Naive thymus-derived CD4-positive, alpha-beta T cell (primary cell): ENCODE measurements at regions of chr6 and their contacts with region 1.

Region 1: GRCh38 chr6:90285611-90286381 is 10.8 kb downstream of the BACH2 start:
- DNase-seq: peak in 8 of 9 donors; percentile 53 to 87 (median 74)
- ATAC-seq: peak; percentile 68
- H3K4me3 ChIP-seq: peak overlapping the region; percentile 51
- H3K4me3 Mint-ChIP-seq: peak overlapping the region; percentile 83 to 94 (median 88)
- H3K27ac ChIP-seq: peak overlapping the region; percentile 81
- H3K27ac Mint-ChIP-seq: peak overlapping the region; percentile 89 to 100 (median 96)
- H3K4me1 ChIP-seq: peaks cover 21 to 72% of the 10 kb centered on the region in 2 donors
- H3K4me1 Mint-ChIP-seq: peaks cover 54 to 96% (median 92%) of the 10 kb centered on the region in 7 donors
- H3K27me3 ChIP-seq: no peaks in the 10 kb centered on the region
- H3K27me3 Mint-ChIP-seq: peaks cover 0 to 2% (median 0%) of the 10 kb centered on the region in 5 donors

Region 2: GRCh38 chr6:89970609-89971337 is 315.0 kb before region 1 on chr6:
- CTCF ChIA-PET with region 1: no interaction called
- POLR2A ChIA-PET with region 1: no interaction called
- intact Hi-C with region 1: loop called in 1 of 2 experiments (anchors 2 kb)
- DNase-seq: peak in 7 of 9 donors; percentile 31 to 54 (median 39)
- ATAC-seq: peak; percentile 72
- H3K4me3 ChIP-seq: no peak overlapping the region
- H3K4me3 Mint-ChIP-seq: no peak overlapping the region
- H3K27ac ChIP-seq: no peak overlapping the region
- H3K27ac Mint-ChIP-seq: no peak overlapping the region
- H3K4me1 ChIP-seq: peaks cover 0 to 15% of the 10 kb centered on the region in 2 donors
- H3K4me1 Mint-ChIP-seq: peaks cover 9 to 53% (median 40%) of the 10 kb centered on the region in 7 donors
- H3K27me3 ChIP-seq: no peaks in the 10 kb centered on the region
- H3K27me3 Mint-ChIP-seq: no peaks in the 10 kb centered on the region

Region 3: DNA sequence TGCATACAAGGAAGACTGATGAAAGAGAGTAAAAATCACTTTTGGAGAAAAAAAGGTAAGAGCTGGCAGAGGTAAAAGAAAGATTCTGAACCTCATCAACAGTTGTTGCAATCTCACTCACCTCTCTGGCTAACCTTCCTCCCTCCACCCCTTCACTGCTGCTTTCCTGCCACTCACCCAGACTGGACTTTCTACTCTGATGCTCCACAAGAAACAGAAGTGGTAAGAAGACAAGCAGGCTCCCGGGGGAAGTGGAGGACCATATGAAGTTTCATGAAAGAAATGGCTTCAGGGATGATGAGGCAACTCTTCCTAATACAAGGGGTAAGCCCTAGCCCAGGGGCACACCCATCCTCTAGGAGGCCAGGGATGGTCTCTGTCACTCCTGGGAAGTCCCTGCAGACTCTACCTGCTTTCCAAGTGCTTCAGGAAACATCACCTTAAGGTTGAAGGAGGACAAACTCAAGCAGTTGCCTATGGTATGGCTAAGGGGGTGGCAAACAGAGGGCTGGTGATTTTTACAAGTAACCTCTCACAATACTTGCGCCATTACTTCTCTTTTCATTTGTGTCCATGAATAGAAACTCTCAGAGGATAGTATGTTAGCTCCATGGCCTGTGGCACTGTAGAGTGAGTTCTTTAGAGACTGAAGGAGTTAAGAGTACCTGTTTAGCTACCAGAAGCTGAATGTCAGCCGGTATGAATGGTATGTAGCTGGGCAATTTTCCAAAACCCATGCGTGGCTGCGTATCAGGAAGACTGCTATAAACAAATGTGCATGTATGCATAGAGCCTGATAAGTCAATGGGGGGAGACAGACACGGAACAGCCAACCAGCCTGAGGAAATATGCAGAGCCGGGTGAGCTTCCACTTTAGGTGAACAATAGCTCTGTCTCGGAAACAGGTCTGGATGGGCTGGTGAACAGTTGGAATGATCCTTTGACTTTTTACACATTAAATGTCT is 101.2 kb before region 1 on chr6:
- CTCF ChIA-PET with region 1: interaction called, 4 read pairs
- POLR2A ChIA-PET with region 1: interaction called, 3 read pairs
- intact Hi-C with region 1: loop called in 1 of 2 experiments (anchors 2 kb)
- DNase-seq: peak in 2 of 9 donors; percentile 31 to 41
- ATAC-seq: no peak
- H3K4me3 ChIP-seq: peak overlapping the region; percentile 18
- H3K4me3 Mint-ChIP-seq: peak overlapping the region; percentile 1 to 81 (median 66)
- H3K27ac ChIP-seq: peak overlapping the region; percentile 50
- H3K27ac Mint-ChIP-seq: peak overlapping the region; percentile 47 to 97 (median 93)
- H3K4me1 ChIP-seq: peaks cover 0 to 63% of the 10 kb centered on the region in 2 donors
- H3K4me1 Mint-ChIP-seq: peaks cover 34 to 91% (median 79%) of the 10 kb centered on the region in 7 donors
- H3K27me3 ChIP-seq: no peaks in the 10 kb centered on the region
- H3K27me3 Mint-ChIP-seq: no peaks in the 10 kb centered on the region

Region 4: DNA sequence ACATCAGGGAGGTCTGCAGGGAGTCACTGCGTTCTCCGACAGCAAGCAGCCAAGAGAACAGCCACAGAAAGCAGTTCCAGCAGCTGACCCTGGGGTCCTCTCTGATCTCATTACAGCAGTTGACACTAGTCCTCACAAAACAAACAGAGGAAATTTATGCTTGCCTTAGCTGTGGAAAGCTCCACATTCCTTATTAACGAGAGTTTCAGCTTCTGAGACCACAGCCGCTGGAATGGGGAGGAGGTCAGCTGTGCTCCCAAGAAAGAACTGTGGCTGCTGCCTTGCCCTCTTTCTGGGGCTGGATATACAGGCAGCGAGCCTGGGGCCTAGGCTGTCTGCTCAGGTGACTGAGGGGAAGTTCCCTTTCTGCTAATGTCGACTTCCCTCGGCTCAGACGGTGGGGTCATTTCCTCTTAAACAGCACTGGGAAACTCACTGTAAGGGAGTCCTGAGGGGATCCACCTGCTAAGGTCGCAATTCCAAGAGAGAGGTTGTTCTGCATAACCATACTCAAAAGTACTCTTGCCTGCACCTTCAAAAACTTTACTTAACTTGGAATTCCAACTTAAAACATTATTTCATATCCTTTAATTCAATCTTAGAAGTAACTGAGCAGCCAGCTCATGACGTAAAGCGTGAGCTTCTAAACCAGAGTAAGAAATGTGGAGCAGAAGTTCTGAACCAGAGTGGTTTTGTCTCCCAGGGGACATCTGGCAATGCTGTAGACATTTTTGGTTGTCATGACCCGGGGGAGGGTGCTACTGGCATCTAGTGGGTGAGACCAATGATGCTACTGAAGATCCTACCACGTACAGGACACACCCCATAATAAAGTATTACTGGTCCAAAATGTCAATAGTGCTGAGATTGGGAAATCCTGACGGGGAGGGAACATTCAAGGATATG is 69.5 kb before region 1 on chr6:
- CTCF ChIA-PET with region 1: interaction called, 6 read pairs
- POLR2A ChIA-PET with region 1: interaction called, 13 read pairs
- intact Hi-C with region 1: loop called (anchors 1 kb)
- DNase-seq: peak in 5 of 9 donors; percentile 61 to 82 (median 63)
- ATAC-seq: peak; percentile 69
- H3K4me3 ChIP-seq: peak overlapping the region; percentile 18
- H3K4me3 Mint-ChIP-seq: peak overlapping the region in 7 of 10 donors; percentile 42 to 74 (median 68)
- H3K27ac ChIP-seq: peak overlapping the region; percentile 85
- H3K27ac Mint-ChIP-seq: no peak overlapping the region
- H3K4me1 ChIP-seq: peaks cover 0 to 97% of the 10 kb centered on the region in 2 donors
- H3K4me1 Mint-ChIP-seq: peaks cover 0 to 33% (median 31%) of the 10 kb centered on the region in 7 donors
- H3K27me3 ChIP-seq: no peaks in the 10 kb centered on the region
- H3K27me3 Mint-ChIP-seq: no peaks in the 10 kb centered on the region

Region 5: GRCh38 chr6:90251295-90251992 is 34.4 kb before region 1 on chr6:
- CTCF ChIA-PET with region 1: interaction called, 3 read pairs
- POLR2A ChIA-PET with region 1: interaction called, 4 read pairs
- intact Hi-C with region 1: loop called (anchors 1 kb)
- DNase-seq: no peak
- ATAC-seq: no peak
- H3K4me3 ChIP-seq: no peak overlapping the region
- H3K4me3 Mint-ChIP-seq: peak overlapping the region in 8 of 10 donors; percentile 7 to 71 (median 48)
- H3K27ac ChIP-seq: peak overlapping the region; percentile 53
- H3K27ac Mint-ChIP-seq: peak overlapping the region; percentile 49 to 98 (median 85)
- H3K4me1 ChIP-seq: peaks cover 0 to 55% of the 10 kb centered on the region in 2 donors
- H3K4me1 Mint-ChIP-seq: peaks cover 37 to 99% (median 90%) of the 10 kb centered on the region in 7 donors
- H3K27me3 ChIP-seq: no peaks in the 10 kb centered on the region
- H3K27me3 Mint-ChIP-seq: no peaks in the 10 kb centered on the region

Region 6: DNA sequence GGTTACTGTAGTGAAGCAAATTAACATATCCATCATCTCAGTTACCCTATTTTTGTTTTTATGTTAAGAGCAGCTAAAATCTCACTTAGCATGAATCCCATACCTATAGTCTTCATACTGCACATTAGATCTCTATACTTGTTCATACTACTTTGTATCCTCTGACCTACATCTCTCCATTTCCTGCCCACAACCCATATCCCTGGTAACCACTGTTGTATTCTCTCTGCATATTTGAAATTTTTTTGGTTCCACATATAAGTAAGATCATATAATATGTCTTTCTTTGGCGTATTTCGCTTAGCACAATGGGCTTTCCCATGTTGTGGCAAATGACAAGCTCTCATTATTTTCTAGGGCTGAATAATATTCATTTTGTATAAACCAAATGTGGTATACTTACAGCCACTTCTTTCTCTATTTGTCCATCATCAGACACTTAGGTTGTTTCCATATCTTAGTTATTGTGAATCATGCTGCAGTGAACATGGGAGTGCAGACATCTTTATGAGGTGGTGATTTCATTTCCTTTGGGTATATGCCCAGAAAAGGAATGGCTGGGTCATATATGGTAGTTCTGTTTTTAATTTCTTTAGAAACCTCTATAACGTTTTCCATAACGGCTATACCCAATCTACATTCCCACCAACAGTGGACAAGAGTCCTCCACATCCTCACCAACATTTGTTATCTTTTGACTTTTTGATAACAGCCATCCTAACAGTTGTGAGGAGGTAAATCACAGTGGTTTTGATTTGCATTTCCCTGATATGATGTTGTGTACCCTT is 28.9 kb before region 1 on chr6:
- CTCF ChIA-PET with region 1: interaction called, 3 read pairs
- POLR2A ChIA-PET with region 1: interaction called, 4 read pairs
- intact Hi-C with region 1: loop called (anchors 1 kb)
- DNase-seq: peak in 6 of 9 donors; percentile 57 to 76 (median 66)
- ATAC-seq: peak; percentile 82
- H3K4me3 ChIP-seq: no peak overlapping the region
- H3K4me3 Mint-ChIP-seq: peak overlapping the region in 7 of 10 donors; percentile 1 to 71 (median 20)
- H3K27ac ChIP-seq: peak overlapping the region; percentile 59
- H3K27ac Mint-ChIP-seq: peak overlapping the region; percentile 9 to 98 (median 75)
- H3K4me1 ChIP-seq: peaks cover 0 to 63% of the 10 kb centered on the region in 2 donors
- H3K4me1 Mint-ChIP-seq: peaks cover 42 to 97% (median 95%) of the 10 kb centered on the region in 7 donors
- H3K27me3 ChIP-seq: no peaks in the 10 kb centered on the region
- H3K27me3 Mint-ChIP-seq: no peaks in the 10 kb centered on the region

Region 7: DNA sequence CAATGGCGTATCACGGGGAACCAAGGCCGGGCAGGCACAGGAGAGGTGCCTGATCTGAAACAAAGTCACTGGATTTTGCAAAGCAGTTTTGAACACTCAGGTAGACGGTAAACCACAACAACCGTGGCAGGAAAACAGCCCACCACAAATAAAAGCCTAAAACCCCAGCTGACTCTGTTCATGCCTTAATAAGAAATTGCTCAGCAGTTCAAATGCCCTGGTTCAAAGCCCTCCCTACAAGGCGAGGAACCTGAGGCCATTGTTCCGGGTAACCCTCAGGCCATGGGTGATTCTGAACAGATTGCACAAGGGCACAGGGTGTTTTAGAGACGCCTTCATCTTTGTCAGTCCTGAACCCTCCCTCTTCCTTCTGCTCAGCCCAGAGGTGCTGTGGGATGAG is 186.9 kb after region 1 on chr6:
- CTCF ChIA-PET with region 1: no interaction called
- POLR2A ChIA-PET with region 1: interaction called, 7 read pairs
- intact Hi-C with region 1: loop called in 1 of 2 experiments (anchors 1 kb)
- DNase-seq: peak in 6 of 9 donors; percentile 33 to 50 (median 37)
- ATAC-seq: peak; percentile 51
- H3K4me3 ChIP-seq: peak overlapping the region; percentile 21
- H3K4me3 Mint-ChIP-seq: peak overlapping the region; percentile 50 to 72 (median 69)
- H3K27ac ChIP-seq: no peak overlapping the region
- H3K27ac Mint-ChIP-seq: peak overlapping the region in 4 of 9 donors; percentile 28 to 90 (median 62)
- H3K4me1 ChIP-seq: peaks cover 22 to 34% of the 10 kb centered on the region in 2 donors
- H3K4me1 Mint-ChIP-seq: peaks cover 20 to 96% (median 48%) of the 10 kb centered on the region in 7 donors
- H3K27me3 ChIP-seq: no peaks in the 10 kb centered on the region
- H3K27me3 Mint-ChIP-seq: peaks cover 0 to 2% (median 0%) of the 10 kb centered on the region in 5 donors

Region 8: DNA sequence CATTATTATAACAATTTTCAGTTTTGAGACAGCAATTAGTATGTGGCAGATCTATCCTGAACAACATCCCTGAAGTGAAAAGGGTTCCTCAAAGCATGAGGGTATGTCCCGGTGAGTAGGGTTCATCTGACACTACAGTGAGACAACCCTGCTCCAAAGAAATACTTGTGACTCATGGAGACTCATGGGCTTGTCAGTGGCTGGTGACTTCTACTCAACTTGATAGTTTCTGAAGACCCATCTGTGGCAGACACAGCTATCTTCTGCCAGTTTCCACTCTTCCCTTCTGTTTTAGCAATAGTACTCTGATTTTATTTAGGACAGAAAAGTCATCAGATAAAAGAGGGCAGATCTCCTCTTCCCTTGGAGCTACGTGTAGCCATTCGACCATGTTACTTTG is 259.7 kb after region 1 on chr6:
- CTCF ChIA-PET with region 1: no interaction called
- POLR2A ChIA-PET with region 1: no interaction called
- intact Hi-C with region 1: no loop called
- DNase-seq: no peak
- ATAC-seq: no peak
- H3K4me3 ChIP-seq: no peak overlapping the region
- H3K4me3 Mint-ChIP-seq: no peak overlapping the region
- H3K27ac ChIP-seq: no peak overlapping the region
- H3K27ac Mint-ChIP-seq: no peak overlapping the region
- H3K4me1 ChIP-seq: no peaks in the 10 kb centered on the region
- H3K4me1 Mint-ChIP-seq: peaks cover 0 to 8% (median 0%) of the 10 kb centered on the region in 7 donors
- H3K27me3 ChIP-seq: no peaks in the 10 kb centered on the region
- H3K27me3 Mint-ChIP-seq: no peaks in the 10 kb centered on the region